Activated T-helper 1 cell treated with anti-CD3 and anti-CD28 coated beads, Interleukin-12 subunit alpha, Interleukin-12 subunit beta, Interleukin-2, Interleukin-4 antibody, amounts not matched to agents 30 ng/mL and 10 ng/mL and 1 ng/mL, durations not matched to agents 14 hours and 24 hours and 36 hours (primary cell): ENCODE measurements at regions of chr14 and their contacts with region 1.

Region 1: DNA sequence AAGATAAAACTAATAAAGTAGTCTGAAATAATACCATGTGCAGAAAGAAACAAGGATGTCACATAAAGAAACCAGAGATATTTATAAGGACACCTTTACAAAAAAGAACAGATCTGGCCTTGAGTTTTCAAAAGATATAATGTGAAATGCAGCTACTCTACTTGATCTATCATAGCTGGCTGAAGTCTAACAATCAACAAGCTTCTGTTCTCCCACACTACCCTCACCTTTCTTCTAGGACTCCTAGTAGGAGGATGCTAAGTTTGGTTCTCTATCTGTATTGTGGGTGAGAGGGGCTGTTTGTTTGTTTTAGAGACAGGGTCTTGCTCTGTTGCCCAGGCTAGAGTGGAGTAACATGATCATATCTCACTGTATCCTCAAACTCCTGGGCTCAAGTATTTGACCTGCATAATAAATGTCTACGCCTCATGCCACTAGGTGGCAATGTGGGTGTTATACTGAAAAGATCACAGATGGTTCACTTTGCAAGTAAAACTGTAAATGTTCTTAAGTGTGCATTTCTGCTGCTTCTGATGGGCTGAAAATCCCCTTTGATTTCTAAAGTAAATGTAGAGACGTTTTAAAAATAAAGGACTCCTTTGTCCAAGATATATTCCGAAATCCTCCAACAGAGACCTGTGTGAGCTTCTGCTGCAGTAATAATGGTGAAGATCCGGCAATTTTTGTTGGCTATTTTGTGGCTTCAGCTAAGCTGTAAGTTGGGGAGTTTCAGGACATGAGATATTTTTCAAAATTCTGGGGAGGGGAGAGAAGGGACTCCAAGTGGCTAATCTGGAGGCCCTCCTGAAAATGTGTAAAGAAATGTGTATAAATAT is 269.3 kb downstream of the DAD1 start:
- DNase-seq: no peak
- H3K4me3 Mint-ChIP-seq: peak overlapping the region; percentile 77
- H3K27ac Mint-ChIP-seq: peak overlapping the region; percentile 72
- H3K4me1 Mint-ChIP-seq: no peaks in the 10 kb centered on the region
- H3K27me3 Mint-ChIP-seq: no peaks in the 10 kb centered on the region

Region 2: GRCh38 chr14:22291406-22291805 is 28.3 kb before region 1 on chr14:
- intact Hi-C with region 1: no loop called
- DNase-seq: no peak
- H3K4me3 Mint-ChIP-seq: no peak overlapping the region
- H3K27ac Mint-ChIP-seq: no peak overlapping the region
- H3K4me1 Mint-ChIP-seq: no peaks in the 10 kb centered on the region
- H3K27me3 Mint-ChIP-seq: no peaks in the 10 kb centered on the region

Region 3: GRCh38 chr14:22375321-22375930 is 55.7 kb after region 1 on chr14:
- intact Hi-C with region 1: loop called (anchors 5 kb)
- DNase-seq: no peak
- H3K4me3 Mint-ChIP-seq: no peak overlapping the region
- H3K27ac Mint-ChIP-seq: no peak overlapping the region
- H3K4me1 Mint-ChIP-seq: no peaks in the 10 kb centered on the region
- H3K27me3 Mint-ChIP-seq: no peaks in the 10 kb centered on the region